ENCODE measurements at regions of chr12 and their contacts with region 1.

Region 1: GRCh38 chr12:89261982-89262381 is 90.3 kb downstream of the DUSP6 start:
- DNase-seq: no peak
- H3K4me3 Mint-ChIP-seq: no peak overlapping the region
- H3K27ac Mint-ChIP-seq: no peak overlapping the region
- H3K4me1 Mint-ChIP-seq: peaks cover 34% of the 10 kb centered on the region
- H3K27me3 Mint-ChIP-seq: no peaks in the 10 kb centered on the region

Region 2: GRCh38 chr12:89238593-89238992 is 23.4 kb before region 1 on chr12:
- intact Hi-C with region 1: no loop called
- DNase-seq: no peak
- H3K4me3 Mint-ChIP-seq: no peak overlapping the region
- H3K27ac Mint-ChIP-seq: no peak overlapping the region
- H3K4me1 Mint-ChIP-seq: peaks cover 82% of the 10 kb centered on the region
- H3K27me3 Mint-ChIP-seq: no peaks in the 10 kb centered on the region

Region 3: DNA sequence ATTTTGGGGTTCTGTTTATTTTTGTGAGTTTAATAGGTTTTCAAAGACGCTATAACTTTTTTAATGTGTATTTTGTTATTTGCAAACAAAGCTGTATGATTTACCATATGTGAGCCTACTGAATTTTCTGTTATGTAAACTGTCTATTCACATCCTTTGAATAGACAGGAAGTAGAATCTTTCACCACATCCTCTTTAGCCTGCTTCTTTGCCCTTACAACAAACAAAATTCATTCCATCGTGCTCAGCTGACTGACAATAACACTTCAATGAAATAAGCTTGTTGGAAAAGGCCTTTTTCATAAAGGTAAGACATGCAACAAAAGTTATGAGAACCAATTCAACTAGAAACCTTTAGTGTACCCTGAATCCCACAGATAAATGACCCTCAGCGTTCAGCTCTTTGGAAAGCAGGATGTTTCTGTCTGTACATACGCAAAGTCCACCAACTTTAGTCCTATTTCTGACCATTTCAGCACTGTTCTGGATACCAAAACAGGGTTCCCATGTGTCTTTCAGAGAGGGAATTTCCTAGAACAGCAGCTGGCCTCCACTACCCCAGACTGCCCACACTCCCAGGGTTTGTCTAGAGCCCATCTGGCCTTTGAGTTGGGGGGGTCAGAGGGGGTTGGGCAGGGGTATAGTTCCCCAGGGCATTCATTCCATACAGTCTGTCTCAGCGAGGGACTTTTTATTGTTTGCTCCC is 19.0 kb after region 1 on chr12:
- intact Hi-C with region 1: loop called (anchors 2 kb)
- DNase-seq: peak; percentile 8
- H3K4me3 Mint-ChIP-seq: peak overlapping the region; percentile 42
- H3K27ac Mint-ChIP-seq: peak overlapping the region; percentile 89
- H3K4me1 Mint-ChIP-seq: peaks cover 45% of the 10 kb centered on the region
- H3K27me3 Mint-ChIP-seq: no peaks in the 10 kb centered on the region

Region 4: DNA sequence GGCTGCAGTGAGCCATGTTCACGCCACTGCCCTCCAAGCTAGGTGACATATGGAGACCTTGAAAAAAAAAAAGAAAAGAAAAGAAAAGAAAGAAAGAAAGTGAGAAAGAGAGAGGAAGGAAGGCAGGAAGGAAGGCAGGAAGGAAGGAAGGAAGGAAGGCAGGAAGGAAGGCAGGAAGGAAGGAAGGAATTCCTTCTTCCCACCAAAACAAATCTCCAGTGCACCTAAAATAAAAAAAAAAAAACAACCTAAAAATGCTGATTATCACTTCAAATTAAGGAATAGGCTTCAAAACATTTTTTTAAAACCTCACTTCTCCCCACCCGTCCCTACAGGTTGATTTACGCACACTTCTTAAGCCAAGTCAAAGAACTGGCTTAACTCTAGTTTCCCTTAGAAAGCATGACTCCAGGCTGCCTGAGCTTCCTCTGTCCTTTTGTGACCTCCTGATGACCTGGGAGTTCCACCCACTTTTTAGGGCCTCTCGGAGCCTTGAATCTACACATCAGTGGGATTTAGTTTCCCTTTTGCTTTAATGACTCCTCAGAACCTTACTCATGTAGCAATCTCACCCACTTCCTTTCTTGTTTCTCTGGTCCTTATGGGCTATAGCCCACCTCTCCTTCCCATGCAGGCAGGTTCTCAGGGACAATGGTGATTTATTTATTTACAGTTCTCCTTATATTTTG is 71.7 kb after region 1 on chr12:
- intact Hi-C with region 1: loop called (anchors 5 kb)
- DNase-seq: no peak
- H3K4me3 Mint-ChIP-seq: peak overlapping the region; percentile 46
- H3K27ac Mint-ChIP-seq: peak overlapping the region; percentile 76
- H3K4me1 Mint-ChIP-seq: peaks cover 26% of the 10 kb centered on the region
- H3K27me3 Mint-ChIP-seq: no peaks in the 10 kb centered on the region

Region 5: DNA sequence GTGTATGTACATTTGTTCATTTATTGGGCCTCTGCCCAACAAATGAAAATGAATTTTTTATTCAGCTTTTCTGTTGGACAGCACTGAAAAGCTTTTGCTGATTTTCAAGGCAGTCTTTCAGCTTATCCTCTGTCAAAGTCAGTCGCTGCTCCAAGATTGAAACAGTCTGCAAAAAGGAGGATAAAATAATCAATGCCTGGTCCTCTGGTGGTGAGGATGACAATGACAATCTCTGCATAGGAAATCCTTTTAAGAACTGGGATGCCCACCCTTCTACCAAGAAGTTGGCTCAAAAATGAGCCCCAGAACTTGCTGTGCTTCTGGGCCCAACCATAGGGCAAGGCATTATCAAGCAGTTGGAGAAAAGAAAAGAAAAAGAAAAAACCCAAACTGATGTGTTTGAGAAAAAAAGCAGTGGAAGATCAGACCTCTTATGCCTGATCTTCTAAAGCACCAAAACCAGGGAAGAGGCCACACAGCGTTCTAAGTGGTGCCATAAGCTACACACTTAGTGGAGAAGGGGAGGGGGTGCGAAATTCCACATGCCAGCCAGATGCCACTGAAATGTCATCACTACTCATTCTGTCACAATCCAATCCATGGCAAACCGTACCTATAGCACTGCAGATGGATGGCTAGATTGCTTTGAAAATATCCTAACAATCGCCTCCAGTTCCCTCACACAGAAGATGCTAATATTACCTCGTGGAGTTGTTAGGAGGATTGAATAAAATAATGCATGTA is 159.3 kb after region 1 on chr12:
- intact Hi-C with region 1: no loop called
- DNase-seq: no peak
- H3K4me3 Mint-ChIP-seq: no peak overlapping the region
- H3K27ac Mint-ChIP-seq: peak overlapping the region; percentile 42
- H3K4me1 Mint-ChIP-seq: peaks cover 16% of the 10 kb centered on the region
- H3K27me3 Mint-ChIP-seq: no peaks in the 10 kb centered on the region

Measured in activated T-helper 1 cell treated with anti-CD3 and anti-CD28 coated beads, Interleukin-12 subunit alpha, Interleukin-12 subunit beta, Interleukin-2, Interleukin-4 antibody, amounts not matched to agents 30 ng/mL and 10 ng/mL and 1 ng/mL, durations not matched to agents 14 hours and 24 hours and 36 hours (primary cell).